Tibial artery (tissue), 4 donors: ENCODE measurements at regions of chr12 and their contacts with region 1.

Region 1: GRCh38 chr12:15532364-15532977 is 210.2 kb downstream of the PTPRO start:
- DNase-seq: no peak
- H3K4me3 ChIP-seq: no peak overlapping the region
- H3K27ac ChIP-seq: peak overlapping the region; percentile 19 to 42
- H3K4me1 ChIP-seq: peaks cover 0 to 61% (median 14%) of the 10 kb centered on the region in 4 donors
- H3K27me3 ChIP-seq: no peaks in the 10 kb centered on the region
- CTCF ChIP-seq: peak; percentile 56 to 65

Region 2: GRCh38 chr12:15584366-15585041 is 52.0 kb after region 1 on chr12:
- intact Hi-C with region 1: loop called (anchors 5 kb)
- DNase-seq: no peak
- H3K4me3 ChIP-seq: no peak overlapping the region
- H3K27ac ChIP-seq: no peak overlapping the region
- H3K4me1 ChIP-seq: peaks cover 0 to 4% (median 0%) of the 10 kb centered on the region in 4 donors
- H3K27me3 ChIP-seq: no peaks in the 10 kb centered on the region
- CTCF ChIP-seq: peak; percentile 77 to 78